ENCODE measurements at regions of chr4 and their contacts with region 1.

Region 1: GRCh38 chr4:65302145-65302544 is 368.1 kb downstream of the EPHA5 start:
- DNase-seq: no peak
- H3K4me3 ChIP-seq: no peak overlapping the region
- H3K27ac ChIP-seq: no peak overlapping the region
- H3K4me1 ChIP-seq: no peaks in the 10 kb centered on the region
- H3K27me3 ChIP-seq: no peaks in the 10 kb centered on the region
- CTCF ChIP-seq: no peak
- EP300 ChIP-seq: no peak
- POLR2A ChIP-seq: no peak

Region 2: GRCh38 chr4:65250916-65251315 is 51.2 kb before region 1 on chr4:
- in situ Hi-C with region 1: no loop called
- intact Hi-C with region 1: loop called (anchors 2 kb)
- DNase-seq: no peak
- H3K4me3 ChIP-seq: no peak overlapping the region
- H3K27ac ChIP-seq: no peak overlapping the region
- H3K4me1 ChIP-seq: no peaks in the 10 kb centered on the region
- H3K27me3 ChIP-seq: no peaks in the 10 kb centered on the region
- CTCF ChIP-seq: no peak
- EP300 ChIP-seq: no peak
- POLR2A ChIP-seq: no peak

Measured in transverse colon (tissue), 4 donors.